ENCODE measurements at regions of chr1 and their contacts with region 1.

Region 1: DNA sequence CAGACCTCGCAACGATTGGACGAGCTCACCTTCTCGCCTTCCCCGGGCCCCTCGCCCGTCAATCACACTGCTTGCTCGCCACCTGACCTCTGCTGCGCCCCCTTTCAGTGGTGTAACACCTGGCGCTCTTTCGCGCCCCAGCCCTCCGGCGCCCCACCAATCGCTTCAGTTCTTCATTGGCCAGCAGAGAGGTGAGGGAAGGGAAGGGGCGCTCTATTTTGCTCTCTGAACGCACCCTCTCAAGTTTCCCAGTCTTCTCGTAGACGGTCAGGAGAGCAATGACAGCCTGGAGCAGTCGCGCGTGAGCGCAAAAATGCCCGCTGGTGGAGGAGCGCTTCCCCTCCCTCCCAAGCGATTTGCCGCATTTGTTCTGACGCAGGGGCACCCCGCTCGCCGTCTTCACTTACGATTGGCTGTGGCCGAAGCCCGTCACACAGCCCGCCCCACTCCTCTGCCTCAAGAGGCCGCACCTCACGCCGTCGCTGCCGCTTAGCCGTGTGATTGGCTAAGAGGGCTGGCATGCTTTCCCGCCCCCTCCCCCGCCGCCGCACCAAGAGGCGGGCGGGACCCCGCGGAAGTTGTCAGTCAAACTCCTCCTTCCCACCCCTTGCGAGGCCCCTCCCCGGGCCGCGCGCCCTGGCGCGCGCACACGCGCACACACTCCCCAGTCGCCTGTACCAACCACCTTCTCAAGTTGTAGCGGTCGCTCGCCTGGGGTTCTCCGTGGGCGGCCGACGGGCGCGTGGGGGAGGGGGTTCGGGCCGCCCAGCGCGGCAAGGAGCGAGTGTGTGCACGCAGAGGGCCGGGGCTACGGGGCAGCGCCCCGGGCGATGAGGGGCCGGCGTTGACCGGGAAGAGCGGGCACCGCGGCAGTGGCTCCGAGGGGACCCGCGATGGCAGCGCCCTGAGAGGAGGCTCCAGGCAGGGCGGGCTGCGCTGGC is at the start of gene PPP2R5A:
- DNase-seq: peak; percentile 99
- ATAC-seq: peak; percentile 98
- H3K4me3 ChIP-seq: peak within 1 kb of the TSS; percentile 69 to 73
- H3K27ac ChIP-seq: peak within 1 kb of the TSS; percentile 81 to 97
- H3K4me1 ChIP-seq: peaks cover 0 to 3% of the 10 kb centered on the region in 2 donors
- H3K27me3 ChIP-seq: no peaks in the 10 kb centered on the region
- total RNA-seq, gene PPP2R5A: 43.2 to 45.3 TPM

Region 2: GRCh38 chr1:212060632-212061469 is 224.2 kb before region 1 on chr1:
- intact Hi-C with region 1: no loop called
- DNase-seq: no peak
- ATAC-seq: no peak
- H3K4me3 ChIP-seq: no peak overlapping the region
- H3K27ac ChIP-seq: no peak overlapping the region
- H3K4me1 ChIP-seq: no peaks in the 10 kb centered on the region
- H3K27me3 ChIP-seq: no peaks in the 10 kb centered on the region

Region 3: DNA sequence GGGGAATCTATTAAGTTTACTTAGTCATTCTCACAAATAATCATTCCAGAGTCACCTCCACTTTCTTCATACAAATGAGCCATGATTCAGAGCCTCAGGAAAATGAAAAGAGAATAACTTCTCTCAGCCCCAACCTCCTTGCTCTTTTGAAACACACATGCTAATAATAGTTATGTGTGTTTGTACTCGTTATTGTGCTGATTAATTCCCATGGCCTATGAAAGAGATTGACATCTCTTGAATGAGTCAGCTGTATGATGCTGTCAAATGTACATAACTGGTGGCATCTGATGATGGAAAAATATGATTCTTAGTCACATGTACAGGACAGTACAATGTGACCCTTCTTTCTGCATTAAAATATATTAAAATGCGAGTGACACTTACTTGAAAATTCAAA is 208.0 kb before region 1 on chr1:
- intact Hi-C with region 1: loop called (anchors 5 kb)
- DNase-seq: no peak
- ATAC-seq: no peak
- H3K4me3 ChIP-seq: no peak overlapping the region
- H3K27ac ChIP-seq: no peak overlapping the region
- H3K4me1 ChIP-seq: no peaks in the 10 kb centered on the region
- H3K27me3 ChIP-seq: no peaks in the 10 kb centered on the region

Region 4: GRCh38 chr1:212234431-212235395 is 50.3 kb before region 1 on chr1:
- intact Hi-C with region 1: loop called in 1 of 2 experiments (anchors 5 kb)
- DNase-seq: peak in 1 of 2 donors; percentile 73
- ATAC-seq: peak; percentile 93
- H3K4me3 ChIP-seq: no peak overlapping the region
- H3K27ac ChIP-seq: no peak overlapping the region
- H3K4me1 ChIP-seq: peaks cover 0 to 3% of the 10 kb centered on the region in 2 donors
- H3K27me3 ChIP-seq: no peaks in the 10 kb centered on the region

Region 5: DNA sequence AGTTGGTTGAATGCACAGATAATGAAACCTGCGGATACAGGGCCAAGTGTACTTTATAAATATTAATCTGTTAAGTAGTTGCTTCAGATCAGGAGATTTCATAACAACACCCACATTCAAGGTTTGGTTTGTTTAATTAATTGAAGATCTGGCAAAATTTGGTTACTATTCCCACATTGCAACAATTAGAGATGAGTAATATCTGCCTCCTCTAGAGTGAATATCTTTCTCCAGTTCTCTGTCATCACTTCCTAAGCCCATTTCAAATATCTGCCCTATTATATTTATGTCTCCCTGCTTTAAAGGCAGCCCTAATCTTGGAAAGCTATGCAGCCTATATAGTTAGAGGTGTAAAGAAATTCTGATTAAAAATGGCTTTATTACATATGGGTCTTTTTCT is 61.6 kb after region 1 on chr1:
- intact Hi-C with region 1: no loop called
- DNase-seq: no peak
- ATAC-seq: no peak
- H3K4me3 ChIP-seq: no peak overlapping the region
- H3K27ac ChIP-seq: no peak overlapping the region
- H3K4me1 ChIP-seq: no peaks in the 10 kb centered on the region
- H3K27me3 ChIP-seq: no peaks in the 10 kb centered on the region

Measured in aorta (tissue), 5 donors.